A673 (cell line): ENCODE measurements at regions of chr16 and their contacts with region 1.

Region 1: GRCh38 chr16:64991001-64991400 is 130.9 kb downstream of the CDH11 start:
- DNase-seq: peak; percentile 54
- H3K4me3 ChIP-seq: no peak overlapping the region
- H3K27ac ChIP-seq: peak overlapping the region; percentile 66
- H3K4me1 ChIP-seq: peaks cover 65% of the 10 kb centered on the region
- H3K27me3 ChIP-seq: no peaks in the 10 kb centered on the region
- CTCF ChIP-seq: no peak

Region 2: DNA sequence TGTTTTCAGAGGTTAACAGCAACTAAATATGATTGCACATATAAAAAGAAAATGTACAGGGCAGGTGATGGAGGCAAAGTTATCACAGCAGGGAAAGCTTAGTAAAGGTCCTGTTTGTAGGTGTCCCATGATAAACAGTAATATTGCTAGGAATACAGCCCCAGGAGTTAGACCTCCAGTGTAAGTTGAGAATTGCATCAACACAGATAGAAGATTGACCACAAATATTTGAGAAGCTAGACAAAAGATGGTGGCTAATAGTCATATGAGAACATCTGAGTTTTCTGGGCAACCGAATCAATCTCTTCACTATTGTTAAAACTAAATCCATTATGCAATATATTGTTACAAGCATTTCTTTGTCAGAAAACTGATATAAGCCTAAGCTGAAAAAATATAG is 21.8 kb before region 1 on chr16:
- CTCF ChIA-PET with region 1: no interaction called
- POLR2A ChIA-PET with region 1: no interaction called
- intact Hi-C with region 1: loop called (anchors 2 kb)
- DNase-seq: no peak
- H3K4me3 ChIP-seq: no peak overlapping the region
- H3K27ac ChIP-seq: no peak overlapping the region
- H3K4me1 ChIP-seq: peaks cover 49% of the 10 kb centered on the region
- H3K27me3 ChIP-seq: no peaks in the 10 kb centered on the region
- CTCF ChIP-seq: no peak

Region 3: DNA sequence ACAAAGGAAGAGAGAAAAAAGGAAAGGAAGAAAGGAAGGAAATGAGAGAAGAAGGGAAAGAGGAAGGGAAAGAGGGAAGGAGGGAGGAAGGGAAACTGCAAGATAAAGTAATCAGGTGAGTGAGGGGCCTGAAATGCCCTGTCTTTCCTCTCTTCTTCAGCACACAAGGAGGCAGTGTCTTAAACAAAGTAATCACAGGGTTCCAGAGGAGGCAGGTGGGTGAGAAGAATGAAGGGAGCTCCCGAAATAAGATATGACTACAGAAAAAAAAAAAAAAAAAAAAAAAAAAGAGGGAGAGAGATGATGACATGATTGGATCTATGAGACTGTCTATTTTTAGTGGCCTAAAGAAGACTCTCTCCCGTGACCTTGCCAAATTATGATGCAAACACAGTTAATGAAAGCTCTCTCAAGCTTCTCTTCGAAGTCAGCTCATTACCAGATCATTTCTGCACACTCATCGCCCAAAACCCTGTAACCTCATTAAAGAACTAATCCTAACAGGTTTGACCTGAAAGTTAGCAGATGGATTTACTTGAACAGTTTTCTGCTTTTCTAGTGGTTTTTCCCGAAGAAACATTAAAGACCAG is 77.2 kb after region 1 on chr16:
- CTCF ChIA-PET with region 1: no interaction called
- POLR2A ChIA-PET with region 1: no interaction called
- intact Hi-C with region 1: loop called (anchors 2 kb)
- DNase-seq: peak; percentile 48
- H3K4me3 ChIP-seq: no peak overlapping the region
- H3K27ac ChIP-seq: peak overlapping the region; percentile 39
- H3K4me1 ChIP-seq: peaks cover 44% of the 10 kb centered on the region
- H3K27me3 ChIP-seq: no peaks in the 10 kb centered on the region
- CTCF ChIP-seq: no peak